CD14-positive monocyte (primary cell): ENCODE measurements at regions of chr6 and their contacts with region 1.

Region 1: DNA sequence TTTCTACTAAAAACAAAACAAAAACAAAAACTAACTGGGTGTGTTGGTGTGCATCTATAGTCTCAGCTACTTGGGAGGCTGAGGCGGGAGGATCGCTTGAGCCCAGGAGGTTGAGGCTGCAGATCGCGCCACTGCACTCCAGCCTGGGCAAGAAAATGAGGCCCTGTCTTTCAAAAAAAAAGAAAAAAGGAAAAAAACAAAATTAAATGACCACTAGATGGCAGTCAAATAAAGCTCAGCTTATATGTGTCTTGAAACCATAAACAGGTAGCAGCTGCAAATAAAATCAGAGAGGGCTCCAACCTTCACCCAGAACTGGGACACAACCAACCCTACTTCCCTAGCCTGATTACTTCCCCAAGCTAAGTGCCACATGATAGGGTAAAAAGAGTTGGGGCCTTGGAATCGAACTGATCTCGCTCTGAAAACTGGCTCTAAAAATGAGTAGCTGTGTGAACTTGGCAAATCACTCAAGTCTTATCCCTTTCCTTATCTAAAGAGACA is 67.1 kb upstream of the ADGRF4 start:
- DNase-seq: peak in 2 of 3 donors; percentile 8 to 29
- H3K4me3 ChIP-seq: no peak overlapping the region
- H3K4me3 Mint-ChIP-seq: peak overlapping the region in 1 of 2 donors; percentile 51
- H3K27ac ChIP-seq: no peak overlapping the region
- H3K27ac Mint-ChIP-seq: no peak overlapping the region
- H3K4me1 ChIP-seq: no peaks in the 10 kb centered on the region
- H3K4me1 Mint-ChIP-seq: peaks cover 2% of the 10 kb centered on the region
- H3K27me3 ChIP-seq: no peaks in the 10 kb centered on the region
- H3K27me3 Mint-ChIP-seq: peaks cover 0 to 3% (median 0%) of the 10 kb centered on the region in 3 donors
- CTCF ChIP-seq: peak; percentile 77

Region 2: GRCh38 chr6:47780510-47781356 is 149.4 kb after region 1 on chr6:
- intact Hi-C with region 1: loop called in 1 of 2 experiments (anchors 5 kb)
- DNase-seq: peak; percentile 13 to 20 (median 14)
- H3K4me3 ChIP-seq: no peak overlapping the region
- H3K4me3 Mint-ChIP-seq: no peak overlapping the region
- H3K27ac ChIP-seq: no peak overlapping the region
- H3K27ac Mint-ChIP-seq: no peak overlapping the region
- H3K4me1 ChIP-seq: no peaks in the 10 kb centered on the region
- H3K4me1 Mint-ChIP-seq: peaks cover 3% of the 10 kb centered on the region
- H3K27me3 ChIP-seq: no peaks in the 10 kb centered on the region
- H3K27me3 Mint-ChIP-seq: peaks cover 0 to 7% (median 4%) of the 10 kb centered on the region in 3 donors
- CTCF ChIP-seq: peak; percentile 53